Brain microvascular endothelial cell (primary cell): ENCODE measurements at regions of chr1 and their contacts with region 1.

Region 1: DNA sequence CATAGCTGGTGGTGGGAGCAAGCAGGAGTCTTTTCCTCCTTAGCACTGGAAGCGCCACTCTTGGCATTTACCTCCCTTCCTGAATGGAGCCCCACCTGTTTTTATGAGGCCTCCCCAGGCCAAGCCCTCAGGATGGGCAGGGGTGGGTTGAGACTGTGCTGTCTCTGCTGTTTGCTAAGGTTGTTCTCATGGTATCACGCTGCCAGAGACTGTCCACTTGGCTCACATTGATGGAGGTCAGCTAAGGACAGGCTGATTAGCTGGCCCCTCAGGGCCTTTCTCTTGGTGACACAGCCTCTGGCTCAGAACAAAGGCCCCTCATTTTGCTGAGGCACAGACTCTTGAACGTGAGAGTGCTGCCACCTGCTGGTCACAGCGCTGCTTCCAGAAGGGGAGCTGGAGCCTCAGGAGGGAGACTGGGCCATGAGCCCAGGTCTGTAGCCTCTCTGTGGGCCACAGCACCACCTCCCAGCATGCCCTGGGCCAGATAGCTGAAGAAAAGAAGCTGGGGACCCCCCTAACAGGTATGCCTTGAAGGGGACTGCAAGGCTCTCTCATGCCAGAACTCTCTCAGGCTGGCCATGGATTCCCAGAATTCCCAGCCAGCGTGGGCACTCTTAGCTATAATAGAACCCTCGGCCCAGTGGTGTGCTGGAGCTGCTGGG is 85.6 kb downstream of the CD58 start:
- DNase-seq: peak; percentile 76
- H3K4me3 ChIP-seq: no peak overlapping the region
- H3K27ac ChIP-seq: no peak overlapping the region
- H3K27me3 ChIP-seq: no peaks in the 10 kb centered on the region
- CTCF ChIP-seq: peak; percentile 95

Region 2: DNA sequence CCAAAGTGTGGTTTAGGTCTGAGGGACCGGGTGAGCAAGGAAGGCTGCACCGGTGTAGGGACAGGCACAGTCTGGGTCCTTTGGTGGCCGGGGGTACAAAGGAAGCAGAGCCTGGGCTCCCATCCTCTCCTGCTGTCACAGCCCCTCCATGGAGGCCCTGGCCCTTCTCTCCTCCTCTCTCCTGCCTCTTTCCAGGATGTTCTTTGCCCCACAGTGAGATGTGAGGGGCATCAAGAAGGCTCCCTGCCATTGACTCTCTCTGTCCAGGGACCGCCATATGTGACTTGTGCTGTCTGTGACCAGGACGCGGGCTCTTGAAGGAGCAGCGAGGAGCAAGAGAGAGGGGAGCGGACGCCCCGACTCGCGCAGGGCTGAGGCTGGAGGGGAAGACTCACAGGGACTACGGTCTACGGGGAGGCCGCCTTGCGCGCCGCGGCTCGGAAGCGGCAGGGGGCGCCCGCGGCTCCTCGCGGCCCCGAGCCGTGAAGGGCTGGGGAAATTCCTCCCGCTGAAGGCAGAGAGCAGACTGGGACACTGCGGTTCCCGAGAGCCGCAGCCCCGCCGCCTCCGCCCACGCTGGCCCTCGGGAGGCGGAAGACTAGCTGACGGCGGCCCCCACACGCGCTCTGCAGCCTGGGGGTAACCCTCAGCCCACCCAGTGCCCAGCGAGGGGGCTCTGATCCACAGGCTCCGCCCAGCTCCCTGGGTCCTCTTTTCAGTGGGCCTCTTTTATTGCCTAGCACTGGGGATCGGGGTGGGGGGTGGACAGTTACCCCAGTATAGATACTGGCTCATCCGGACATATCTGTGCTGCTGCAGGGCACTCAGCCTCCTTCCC is 333.2 kb before region 1 on chr1:
- in situ Hi-C with region 1: loop called (anchors 25 kb)
- DNase-seq: peak; percentile 59
- H3K4me3 ChIP-seq: peak overlapping the region; percentile 51
- H3K27ac ChIP-seq: no peak overlapping the region
- H3K27me3 ChIP-seq: peaks cover 2% of the 10 kb centered on the region
- CTCF ChIP-seq: peak; percentile 61

Region 3: GRCh38 chr1:116377541-116378529 is 107.4 kb before region 1 on chr1:
- in situ Hi-C with region 1: loop called (anchors 25 kb)
- DNase-seq: peak; percentile 78
- H3K4me3 ChIP-seq: peak overlapping the region; percentile 12
- H3K27ac ChIP-seq: peak overlapping the region; percentile 86
- H3K27me3 ChIP-seq: no peaks in the 10 kb centered on the region
- CTCF ChIP-seq: no peak